MCF 10A (cell line): ENCODE measurements at regions of chr6 and their contacts with region 1.

Region 1: GRCh38 chr6:30883685-30884520 is at the start of gene DDR1:
- DNase-seq: peak; percentile 95
- H3K4me3 Mint-ChIP-seq: peak within 1 kb of the TSS; percentile 83
- H3K27ac Mint-ChIP-seq: peak within 1 kb of the TSS; percentile 95
- H3K4me1 Mint-ChIP-seq: peaks cover 49% of the 10 kb centered on the region
- H3K27me3 Mint-ChIP-seq: no peaks in the 10 kb centered on the region
- CTCF ChIP-seq: no peak
- total RNA-seq, gene DDR1: 59.7 and 66.0 TPM in 2 replicates

Region 2: GRCh38 chr6:29255530-29255929 is 1628.4 kb before region 1 on chr6:
- CTCF ChIA-PET with region 1: no interaction called
- POLR2A ChIA-PET with region 1: no interaction called
- intact Hi-C with region 1: no loop called
- DNase-seq: no peak
- H3K4me3 Mint-ChIP-seq: no peak overlapping the region
- H3K27ac Mint-ChIP-seq: no peak overlapping the region
- H3K4me1 Mint-ChIP-seq: no peaks in the 10 kb centered on the region
- H3K27me3 Mint-ChIP-seq: peaks cover 15% of the 10 kb centered on the region
- CTCF ChIP-seq: no peak

Region 3: DNA sequence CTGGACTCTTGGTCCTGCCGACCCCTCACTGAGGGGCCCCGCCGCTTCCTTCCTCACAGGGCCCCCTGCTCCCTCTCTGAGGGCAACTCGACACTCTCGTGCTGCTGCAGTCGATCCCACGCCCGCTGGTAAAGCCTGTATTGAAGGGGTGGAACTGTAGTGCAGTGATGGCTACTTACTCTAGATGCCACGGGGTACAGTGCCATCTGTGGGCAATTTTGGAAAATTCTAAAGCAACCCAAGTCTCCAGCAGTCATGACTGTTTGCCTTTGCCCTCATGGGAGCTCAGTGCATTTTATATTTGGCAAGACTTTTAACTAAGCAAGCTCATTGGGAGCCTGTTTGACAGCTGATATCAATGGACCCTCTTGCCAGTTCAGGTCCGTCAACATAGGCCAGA is 243.4 kb before region 1 on chr6:
- CTCF ChIA-PET with region 1: no interaction called
- POLR2A ChIA-PET with region 1: no interaction called
- intact Hi-C with region 1: no loop called
- DNase-seq: peak; percentile 9
- H3K4me3 Mint-ChIP-seq: no peak overlapping the region
- H3K27ac Mint-ChIP-seq: no peak overlapping the region
- H3K4me1 Mint-ChIP-seq: peaks cover 1% of the 10 kb centered on the region
- H3K27me3 Mint-ChIP-seq: no peaks in the 10 kb centered on the region
- CTCF ChIP-seq: no peak

Region 4: GRCh38 chr6:30717042-30717844 is 166.7 kb before region 1 on chr6 and contains the start of gene MDC1:
- CTCF ChIA-PET with region 1: interaction called, 3 read pairs
- POLR2A ChIA-PET with region 1: interaction called, 30 read pairs
- intact Hi-C with region 1: no loop called
- DNase-seq: peak; percentile 100
- H3K4me3 Mint-ChIP-seq: peak within 1 kb of the TSS; percentile 88
- H3K27ac Mint-ChIP-seq: peak within 1 kb of the TSS; percentile 94
- H3K4me1 Mint-ChIP-seq: peaks cover 38% of the 10 kb centered on the region
- H3K27me3 Mint-ChIP-seq: no peaks in the 10 kb centered on the region
- CTCF ChIP-seq: no peak
- total RNA-seq, gene MDC1: 50.6 and 54.5 TPM in 2 replicates

Region 5: GRCh38 chr6:30752157-30752927 is 131.6 kb before region 1 on chr6:
- CTCF ChIA-PET with region 1: interaction called, 6 read pairs
- POLR2A ChIA-PET with region 1: interaction called, 40 read pairs
- intact Hi-C with region 1: no loop called
- DNase-seq: peak; percentile 100
- H3K4me3 Mint-ChIP-seq: peak overlapping the region; percentile 54
- H3K27ac Mint-ChIP-seq: peak overlapping the region; percentile 94
- H3K4me1 Mint-ChIP-seq: peaks cover 49% of the 10 kb centered on the region
- H3K27me3 Mint-ChIP-seq: no peaks in the 10 kb centered on the region
- CTCF ChIP-seq: no peak

Region 6: GRCh38 chr6:30897882-30898281 is 14.0 kb after region 1 on chr6:
- CTCF ChIA-PET with region 1: no interaction called
- POLR2A ChIA-PET with region 1: interaction called, 36 read pairs
- intact Hi-C with region 1: no loop called
- DNase-seq: no peak
- H3K4me3 Mint-ChIP-seq: no peak overlapping the region
- H3K27ac Mint-ChIP-seq: no peak overlapping the region
- H3K4me1 Mint-ChIP-seq: peaks cover 13% of the 10 kb centered on the region
- H3K27me3 Mint-ChIP-seq: no peaks in the 10 kb centered on the region
- CTCF ChIP-seq: no peak

Region 7: GRCh38 chr6:30926644-30927043 is 42.7 kb after region 1 on chr6:
- CTCF ChIA-PET with region 1: no interaction called
- POLR2A ChIA-PET with region 1: interaction called, 15 read pairs
- intact Hi-C with region 1: no loop called
- DNase-seq: peak; percentile 36
- H3K4me3 Mint-ChIP-seq: peak overlapping the region; percentile 42
- H3K27ac Mint-ChIP-seq: peak overlapping the region; percentile 95
- H3K4me1 Mint-ChIP-seq: peaks cover 45% of the 10 kb centered on the region
- H3K27me3 Mint-ChIP-seq: no peaks in the 10 kb centered on the region
- CTCF ChIP-seq: no peak

Region 8: GRCh38 chr6:31004285-31004684 is 120.4 kb after region 1 on chr6:
- CTCF ChIA-PET with region 1: no interaction called
- POLR2A ChIA-PET with region 1: no interaction called
- intact Hi-C with region 1: no loop called
- DNase-seq: no peak
- H3K4me3 Mint-ChIP-seq: no peak overlapping the region
- H3K27ac Mint-ChIP-seq: no peak overlapping the region
- H3K4me1 Mint-ChIP-seq: peaks cover 33% of the 10 kb centered on the region
- H3K27me3 Mint-ChIP-seq: no peaks in the 10 kb centered on the region
- CTCF ChIP-seq: no peak

Region 9: DNA sequence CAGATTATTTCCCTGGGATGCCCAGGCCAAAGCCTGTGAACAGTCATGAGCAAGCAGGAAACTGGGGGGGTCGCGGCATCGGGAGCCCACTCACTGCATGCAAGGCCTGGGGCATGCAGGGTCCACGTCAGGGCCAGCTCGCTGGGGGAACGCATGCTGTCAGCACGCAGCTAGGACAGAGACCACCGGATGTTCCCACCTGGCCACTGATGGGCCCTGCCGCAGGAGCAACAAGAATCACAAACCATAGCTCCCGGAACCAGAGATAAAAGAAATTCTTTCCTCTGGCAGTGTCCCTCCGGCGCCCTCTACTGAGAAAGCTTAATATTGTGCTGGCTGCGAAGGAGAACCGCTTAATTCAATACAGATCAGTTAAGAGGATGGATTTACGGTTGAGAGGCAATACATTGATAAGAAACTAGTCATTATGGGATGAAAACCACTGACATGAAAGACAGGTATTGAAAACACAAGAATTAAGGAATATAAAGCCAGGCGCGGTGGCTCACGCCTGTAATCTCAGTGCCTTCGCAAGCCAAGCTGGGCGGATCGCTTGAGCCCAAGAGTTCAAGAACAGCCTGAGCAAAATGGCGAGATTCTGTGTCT is 195.9 kb after region 1 on chr6:
- CTCF ChIA-PET with region 1: interaction called, 6 read pairs
- POLR2A ChIA-PET with region 1: interaction called, 14 read pairs
- intact Hi-C with region 1: no loop called
- DNase-seq: peak; percentile 69
- H3K4me3 Mint-ChIP-seq: no peak overlapping the region
- H3K27ac Mint-ChIP-seq: no peak overlapping the region
- H3K4me1 Mint-ChIP-seq: peaks cover 16% of the 10 kb centered on the region
- H3K27me3 Mint-ChIP-seq: no peaks in the 10 kb centered on the region
- CTCF ChIP-seq: peak; percentile 62